Natural killer cell (primary cell): ENCODE measurements at regions of chr14 and their contacts with region 1.

Region 1: GRCh38 chr14:64986578-64987571 is at the start of gene FNTB:
- DNase-seq: peak; percentile 86 to 97
- ATAC-seq: peak; percentile 90 to 96 (median 92)
- H3K4me3 ChIP-seq: peak within 1 kb of the TSS; percentile 79
- H3K4me3 Mint-ChIP-seq: peak within 1 kb of the TSS; percentile 99
- H3K27ac ChIP-seq: peak within 1 kb of the TSS; percentile 60
- H3K27ac Mint-ChIP-seq: peak within 1 kb of the TSS; percentile 97 to 98
- H3K4me1 ChIP-seq: peaks cover 27% of the 10 kb centered on the region
- H3K4me1 Mint-ChIP-seq: peaks cover 40 to 42% of the 10 kb centered on the region in 2 donors
- H3K27me3 ChIP-seq: no peaks in the 10 kb centered on the region
- H3K27me3 Mint-ChIP-seq: peaks cover 16 to 25% of the 10 kb centered on the region in 2 donors
- CTCF ChIP-seq: peak; percentile 66
- total RNA-seq, gene FNTB: 4.0 to 8.7 (median 8.4) TPM

Region 2: GRCh38 chr14:64823305-64823861 is 163.5 kb before region 1 on chr14:
- intact Hi-C with region 1: loop called (anchors 1 kb)
- DNase-seq: peak; percentile 60 to 81
- ATAC-seq: peak; percentile 84 to 96 (median 95)
- H3K4me3 ChIP-seq: no peak overlapping the region
- H3K4me3 Mint-ChIP-seq: no peak overlapping the region
- H3K27ac ChIP-seq: no peak overlapping the region
- H3K27ac Mint-ChIP-seq: peak overlapping the region in 1 of 2 donors; percentile 27
- H3K4me1 ChIP-seq: peaks cover 7% of the 10 kb centered on the region
- H3K4me1 Mint-ChIP-seq: peaks cover 6 to 7% of the 10 kb centered on the region in 2 donors
- H3K27me3 ChIP-seq: peaks cover 3% of the 10 kb centered on the region
- H3K27me3 Mint-ChIP-seq: peaks cover 26 to 35% of the 10 kb centered on the region in 2 donors
- CTCF ChIP-seq: peak; percentile 71

Region 3: GRCh38 chr14:64923015-64923414 is 63.9 kb before region 1 on chr14:
- intact Hi-C with region 1: no loop called
- DNase-seq: no peak
- ATAC-seq: no peak
- H3K4me3 ChIP-seq: no peak overlapping the region
- H3K4me3 Mint-ChIP-seq: no peak overlapping the region
- H3K27ac ChIP-seq: no peak overlapping the region
- H3K27ac Mint-ChIP-seq: no peak overlapping the region
- H3K4me1 ChIP-seq: peaks cover 9% of the 10 kb centered on the region
- H3K4me1 Mint-ChIP-seq: peaks cover 32 to 38% of the 10 kb centered on the region in 2 donors
- H3K27me3 ChIP-seq: no peaks in the 10 kb centered on the region
- H3K27me3 Mint-ChIP-seq: no peaks in the 10 kb centered on the region
- CTCF ChIP-seq: no peak

Region 4: DNA sequence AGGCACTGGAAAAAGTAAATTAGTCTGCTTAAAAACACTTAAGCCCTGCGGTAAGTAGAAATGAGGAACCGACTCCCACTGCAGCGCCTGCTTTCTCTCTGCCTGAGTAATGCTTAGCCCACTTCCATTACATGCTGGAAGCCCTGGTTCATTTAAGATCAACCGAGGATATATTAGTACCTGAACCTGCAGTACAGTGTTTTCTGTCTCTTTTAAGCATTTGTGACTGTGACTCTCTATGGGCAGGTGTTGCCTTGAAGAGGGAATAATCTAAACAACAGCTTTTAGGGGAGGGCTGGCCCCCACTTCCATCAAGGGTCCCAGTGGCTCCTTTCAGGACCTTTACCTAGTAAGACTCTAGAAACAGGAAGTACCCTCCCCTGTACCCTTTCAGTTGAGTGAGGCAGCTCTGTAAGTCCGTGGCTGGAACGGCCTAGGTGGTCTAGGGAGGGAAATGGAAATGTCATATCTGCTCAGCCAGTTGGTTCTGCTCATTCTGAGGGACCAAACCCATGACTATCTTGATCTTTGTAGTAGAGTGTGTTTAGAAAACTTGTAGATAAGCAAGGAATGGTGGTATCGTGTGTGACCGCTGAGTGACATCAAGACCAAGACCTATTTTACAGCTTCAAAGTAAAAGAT is 56.0 kb after region 1 on chr14:
- intact Hi-C with region 1: no loop called
- DNase-seq: no peak
- ATAC-seq: peak in 1 of 3 donors; percentile 70
- H3K4me3 ChIP-seq: no peak overlapping the region
- H3K4me3 Mint-ChIP-seq: no peak overlapping the region
- H3K27ac ChIP-seq: no peak overlapping the region
- H3K27ac Mint-ChIP-seq: no peak overlapping the region
- H3K4me1 ChIP-seq: peaks cover 11% of the 10 kb centered on the region
- H3K4me1 Mint-ChIP-seq: peaks cover 21 to 26% of the 10 kb centered on the region in 2 donors
- H3K27me3 ChIP-seq: no peaks in the 10 kb centered on the region
- H3K27me3 Mint-ChIP-seq: no peaks in the 10 kb centered on the region
- CTCF ChIP-seq: no peak

Region 5: GRCh38 chr14:65102441-65103149 is 115.7 kb after region 1 on chr14 and contains the start of gene MAX:
- intact Hi-C with region 1: loop called (anchors 1 kb)
- DNase-seq: peak; percentile 94 to 98
- ATAC-seq: peak; percentile 85 to 97 (median 91)
- H3K4me3 ChIP-seq: peak within 1 kb of the TSS; percentile 76
- H3K4me3 Mint-ChIP-seq: peak within 1 kb of the TSS; percentile 96
- H3K27ac ChIP-seq: peak within 1 kb of the TSS; percentile 94
- H3K27ac Mint-ChIP-seq: peak within 1 kb of the TSS; percentile 94 to 95
- H3K4me1 ChIP-seq: peaks cover 19% of the 10 kb centered on the region
- H3K4me1 Mint-ChIP-seq: peaks cover 37 to 47% of the 10 kb centered on the region in 2 donors
- H3K27me3 ChIP-seq: peaks cover 7% of the 10 kb centered on the region
- H3K27me3 Mint-ChIP-seq: peaks cover 0 to 4% of the 10 kb centered on the region in 2 donors
- CTCF ChIP-seq: no peak
- total RNA-seq, gene MAX: 162 to 208 (median 191) TPM

Region 6: DNA sequence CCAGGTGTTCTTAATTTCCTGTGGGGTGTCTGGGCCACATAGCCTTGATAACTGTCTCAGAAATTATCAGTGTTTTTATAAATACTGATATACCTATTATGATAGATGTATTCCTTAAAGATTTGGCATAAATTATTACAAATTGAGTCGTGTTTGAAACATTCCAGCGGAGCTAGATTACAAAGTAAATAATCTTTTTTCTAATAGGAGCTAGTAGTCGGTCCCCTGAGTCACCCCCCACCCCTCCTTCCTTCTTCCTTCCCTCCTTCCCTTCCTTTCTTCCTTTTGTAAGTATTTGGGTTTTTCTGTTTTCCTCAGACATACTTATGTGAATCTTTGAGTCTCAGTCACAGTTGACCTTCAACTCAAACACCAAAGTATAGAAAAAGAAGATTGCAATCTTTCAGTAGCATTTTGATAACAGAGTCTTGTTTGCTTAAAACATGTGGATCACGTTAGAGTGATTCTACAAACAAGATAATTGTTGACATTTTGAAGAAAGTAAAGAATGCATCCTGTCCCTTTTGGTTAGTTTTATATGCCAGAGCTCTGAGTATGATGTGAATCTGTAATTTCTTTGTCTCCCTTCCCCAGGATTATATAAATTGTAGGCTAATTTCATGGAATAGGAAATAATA is 689.6 kb after region 1 on chr14:
- intact Hi-C with region 1: no loop called
- DNase-seq: no peak
- ATAC-seq: no peak
- H3K4me3 ChIP-seq: no peak overlapping the region
- H3K4me3 Mint-ChIP-seq: no peak overlapping the region
- H3K27ac ChIP-seq: no peak overlapping the region
- H3K27ac Mint-ChIP-seq: no peak overlapping the region
- H3K4me1 ChIP-seq: no peaks in the 10 kb centered on the region
- H3K4me1 Mint-ChIP-seq: no peaks in the 10 kb centered on the region
- H3K27me3 ChIP-seq: no peaks in the 10 kb centered on the region
- H3K27me3 Mint-ChIP-seq: no peaks in the 10 kb centered on the region
- CTCF ChIP-seq: no peak

Region 7: GRCh38 chr14:65958664-65959562 is 972.0 kb after region 1 on chr14:
- intact Hi-C with region 1: loop called (anchors 10 kb)
- DNase-seq: peak in 1 of 2 donors; percentile 71
- ATAC-seq: peak in 2 of 3 donors; percentile 46 to 72
- H3K4me3 ChIP-seq: no peak overlapping the region
- H3K4me3 Mint-ChIP-seq: no peak overlapping the region
- H3K27ac ChIP-seq: no peak overlapping the region
- H3K27ac Mint-ChIP-seq: no peak overlapping the region
- H3K4me1 ChIP-seq: peaks cover 5% of the 10 kb centered on the region
- H3K4me1 Mint-ChIP-seq: peaks cover 8 to 16% of the 10 kb centered on the region in 2 donors
- H3K27me3 ChIP-seq: no peaks in the 10 kb centered on the region
- H3K27me3 Mint-ChIP-seq: peaks cover 3 to 12% of the 10 kb centered on the region in 2 donors
- CTCF ChIP-seq: peak; percentile 76